GM12878 (cell line): ENCODE measurements at regions of chr6 and their contacts with region 1.

Region 1: DNA sequence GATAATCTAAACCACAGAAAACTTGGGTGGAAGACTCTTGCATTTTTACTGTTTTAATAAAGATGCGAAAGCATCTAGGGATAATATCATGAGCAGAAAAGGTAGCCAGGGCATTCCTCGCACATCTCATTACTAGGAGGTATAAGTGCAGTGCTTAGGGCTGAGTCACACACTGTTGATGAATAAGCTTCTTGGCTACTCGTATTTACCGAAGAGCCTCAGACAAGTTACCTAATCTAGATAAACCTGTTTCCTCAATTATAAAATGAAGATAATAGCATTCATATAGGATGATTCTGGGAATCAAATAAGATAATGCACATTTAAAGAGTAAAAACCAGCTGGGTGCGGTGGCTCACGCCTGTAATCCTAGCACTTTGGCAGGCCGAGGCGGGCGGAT is 791 bp upstream of the KIAA0319 start:
- DNase-seq: no peak
- ATAC-seq: no peak
- H3K4me3 ChIP-seq: peak overlapping the region; percentile 66; the same call in 1 of the 2 replicates
- H3K27ac ChIP-seq: no peak overlapping the region
- H3K4me1 ChIP-seq: peaks cover 6% of the 10 kb centered on the region
- H3K27me3 ChIP-seq: no peaks in the 10 kb centered on the region
- CTCF ChIP-seq: no peak
- EP300 ChIP-seq: no peak
- POLR2A ChIP-seq: no peak
- RAD21 ChIP-seq: no peak

Region 2: DNA sequence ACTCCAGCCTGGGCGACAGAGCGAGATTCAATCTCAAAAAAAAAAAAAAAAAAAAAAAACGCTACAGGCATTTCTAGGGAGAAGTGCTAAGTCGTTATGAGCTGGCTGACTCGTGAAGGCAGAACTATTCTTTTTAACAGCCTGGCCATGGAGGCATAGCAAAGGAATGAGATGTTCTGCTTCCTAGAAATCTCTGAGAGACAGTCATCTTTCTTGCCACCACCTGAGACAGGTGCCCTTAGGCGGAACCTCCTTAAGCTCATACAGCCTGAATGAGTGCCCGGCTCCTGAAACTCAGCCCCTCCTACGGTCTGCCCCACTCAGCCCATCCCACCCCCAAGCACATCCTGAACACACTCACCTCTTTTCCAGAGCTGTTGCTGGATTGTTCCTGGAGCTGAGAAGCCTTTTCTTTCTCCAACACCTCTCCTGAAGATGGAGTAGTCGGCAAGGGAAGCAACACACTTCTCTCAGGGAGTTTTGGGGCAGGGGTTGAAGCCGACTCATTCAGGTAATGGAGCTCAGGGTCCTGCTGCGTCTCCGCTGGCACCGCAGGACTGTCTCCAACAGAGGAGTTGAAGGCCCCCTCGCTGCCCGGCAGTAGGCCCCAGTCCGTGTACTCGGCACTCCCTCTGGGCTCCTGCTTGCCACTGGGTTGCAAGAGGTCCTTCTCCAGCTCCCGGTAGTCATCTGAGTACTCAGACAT is 51.1 kb before region 1 on chr6:
- CTCF ChIA-PET with region 1: no interaction called
- POLR2A ChIA-PET with region 1: no interaction called
- RAD21 ChIA-PET with region 1: no interaction called
- SMC1A ChIA-PET with region 1: no interaction called
- in situ Hi-C with region 1: loop called (anchors 5 kb)
- intact Hi-C with region 1: no loop called
- DNase-seq: no peak
- ATAC-seq: no peak
- H3K4me3 ChIP-seq: no peak overlapping the region
- H3K27ac ChIP-seq: no peak overlapping the region
- H3K4me1 ChIP-seq: no peaks in the 10 kb centered on the region
- H3K27me3 ChIP-seq: no peaks in the 10 kb centered on the region; a peak in 1 of 4 replicates
- CTCF ChIP-seq: no peak
- EP300 ChIP-seq: no peak
- POLR2A ChIP-seq: no peak
- RAD21 ChIP-seq: no peak

Region 3: GRCh38 chr6:24606199-24606930 is 40.4 kb before region 1 on chr6:
- CTCF ChIA-PET with region 1: no interaction called
- POLR2A ChIA-PET with region 1: no interaction called
- RAD21 ChIA-PET with region 1: no interaction called
- SMC1A ChIA-PET with region 1: no interaction called
- in situ Hi-C with region 1: no loop called
- intact Hi-C with region 1: no loop called
- DNase-seq: no peak
- ATAC-seq: no peak
- H3K4me3 ChIP-seq: no peak overlapping the region
- H3K27ac ChIP-seq: no peak overlapping the region
- H3K4me1 ChIP-seq: no peaks in the 10 kb centered on the region
- H3K27me3 ChIP-seq: no peaks in the 10 kb centered on the region; a peak in 1 of 4 replicates
- CTCF ChIP-seq: no peak
- EP300 ChIP-seq: no peak
- POLR2A ChIP-seq: no peak
- RAD21 ChIP-seq: no peak

Region 4: DNA sequence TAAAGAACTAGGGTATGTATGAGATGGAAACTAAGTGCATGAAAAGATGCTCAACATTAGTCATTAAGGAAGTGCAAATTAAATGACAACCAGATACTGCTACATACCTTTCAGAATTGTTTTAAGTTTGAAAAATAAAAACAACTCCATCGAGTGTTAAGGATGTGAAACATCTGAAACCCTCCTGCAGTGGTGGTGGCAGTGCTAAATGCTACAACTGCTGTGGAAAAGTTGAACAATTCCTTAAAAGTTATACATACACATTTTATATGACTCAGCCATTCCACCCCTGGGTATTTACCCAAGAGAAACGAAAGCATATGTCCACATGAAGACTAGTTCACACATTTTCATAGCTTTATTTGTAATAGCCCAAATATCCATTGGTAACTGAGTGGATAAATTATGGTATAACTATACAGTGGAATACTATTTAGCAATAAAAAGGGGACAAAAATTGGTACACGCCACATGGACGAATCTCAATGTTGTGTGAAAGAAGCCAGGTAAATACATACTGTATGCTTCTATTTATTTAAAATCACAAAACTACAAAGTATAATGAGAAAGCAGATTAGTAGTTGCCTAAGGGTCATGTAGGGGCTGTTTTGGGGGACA is 141.4 kb after region 1 on chr6:
- CTCF ChIA-PET with region 1: no interaction called
- POLR2A ChIA-PET with region 1: no interaction called
- RAD21 ChIA-PET with region 1: no interaction called
- SMC1A ChIA-PET with region 1: no interaction called
- in situ Hi-C with region 1: no loop called
- intact Hi-C with region 1: no loop called
- DNase-seq: no peak
- ATAC-seq: no peak; the same call in 2 of the 3 replicates
- H3K4me3 ChIP-seq: no peak overlapping the region
- H3K27ac ChIP-seq: no peak overlapping the region
- H3K4me1 ChIP-seq: no peaks in the 10 kb centered on the region
- H3K27me3 ChIP-seq: no peaks in the 10 kb centered on the region
- CTCF ChIP-seq: no peak
- EP300 ChIP-seq: no peak
- POLR2A ChIP-seq: no peak
- RAD21 ChIP-seq: no peak